H1 (cell line): ENCODE measurements at regions of chr2 and their contacts with region 1.

Region 1: GRCh38 chr2:23199115-23199918 is 185.7 kb upstream of the KLHL29 start:
- DNase-seq: peak in 1 of 2 experiments; percentile 55
- H3K4me3 ChIP-seq: no peak overlapping the region
- H3K27ac ChIP-seq: no peak overlapping the region
- H3K4me1 ChIP-seq: no peaks in the 10 kb centered on the region
- H3K27me3 ChIP-seq: no peaks in the 10 kb centered on the region
- CTCF ChIP-seq: peak in 2 of 3 experiments; percentile 43 to 62; a peak in 2 of 4 replicates
- EP300 ChIP-seq: no peak
- POLR2A ChIP-seq: no peak
- RAD21 ChIP-seq: peak; percentile 40 to 60

Region 2: GRCh38 chr2:23188658-23189057 is 10.7 kb before region 1 on chr2:
- CTCF ChIA-PET with region 1: interaction called, 13 read pairs
- POLR2A ChIA-PET with region 1: no interaction called
- DNase-seq: no peak
- H3K4me3 ChIP-seq: no peak overlapping the region
- H3K27ac ChIP-seq: no peak overlapping the region
- H3K4me1 ChIP-seq: no peaks in the 10 kb centered on the region
- H3K27me3 ChIP-seq: no peaks in the 10 kb centered on the region
- CTCF ChIP-seq: no peak
- EP300 ChIP-seq: no peak
- POLR2A ChIP-seq: no peak
- RAD21 ChIP-seq: no peak

Region 3: GRCh38 chr2:23249348-23249747 is 50.0 kb after region 1 on chr2:
- CTCF ChIA-PET with region 1: no interaction called
- POLR2A ChIA-PET with region 1: no interaction called
- DNase-seq: no peak
- H3K4me3 ChIP-seq: no peak overlapping the region
- H3K27ac ChIP-seq: no peak overlapping the region
- H3K4me1 ChIP-seq: no peaks in the 10 kb centered on the region
- H3K27me3 ChIP-seq: no peaks in the 10 kb centered on the region
- CTCF ChIP-seq: no peak
- EP300 ChIP-seq: no peak
- POLR2A ChIP-seq: no peak
- RAD21 ChIP-seq: no peak